K562 (cell line): ENCODE measurements at regions of chr1 and their contacts with region 1.

Region 1: DNA sequence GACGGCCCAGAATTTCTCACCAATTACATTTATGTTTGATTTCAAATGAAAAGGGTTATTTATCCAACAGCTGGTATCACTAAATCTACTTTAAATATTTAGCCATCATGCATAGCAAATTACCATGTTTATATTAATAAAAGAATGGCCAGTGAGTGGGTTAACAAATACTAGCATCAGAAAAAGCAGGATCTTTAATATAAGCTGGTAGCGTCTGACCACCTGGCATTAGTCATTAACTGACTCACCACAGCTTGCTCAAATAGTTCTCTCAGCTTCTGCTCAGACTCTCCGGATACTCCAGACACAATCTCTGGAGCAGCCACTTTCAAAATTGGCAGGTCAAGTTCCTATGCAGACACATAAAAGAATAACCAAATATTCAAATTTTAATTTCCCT is 29.7 kb downstream of the NVL start:
- DNase-seq: no peak
- ATAC-seq: no peak
- H3K4me3 ChIP-seq: no peak overlapping the region
- H3K27ac ChIP-seq: no peak overlapping the region
- H3K4me1 ChIP-seq: no peaks in the 10 kb centered on the region
- H3K27me3 ChIP-seq: no peaks in the 10 kb centered on the region
- CTCF ChIP-seq: no peak
- EP300 ChIP-seq: no peak
- POLR2A ChIP-seq: no peak
- RAD21 ChIP-seq: no peak

Region 2: GRCh38 chr1:224312025-224312424 is 11.7 kb after region 1 on chr1:
- CTCF ChIA-PET with region 1: no interaction called
- POLR2A ChIA-PET with region 1: interaction called, 17 read pairs
- in situ Hi-C with region 1: no loop called
- intact Hi-C with region 1: no loop called
- DNase-seq: no peak
- ATAC-seq: no peak
- H3K4me3 ChIP-seq: no peak overlapping the region
- H3K27ac ChIP-seq: no peak overlapping the region
- H3K4me1 ChIP-seq: no peaks in the 10 kb centered on the region
- H3K27me3 ChIP-seq: no peaks in the 10 kb centered on the region
- CTCF ChIP-seq: no peak
- EP300 ChIP-seq: no peak
- POLR2A ChIP-seq: no peak
- RAD21 ChIP-seq: no peak

Region 3: DNA sequence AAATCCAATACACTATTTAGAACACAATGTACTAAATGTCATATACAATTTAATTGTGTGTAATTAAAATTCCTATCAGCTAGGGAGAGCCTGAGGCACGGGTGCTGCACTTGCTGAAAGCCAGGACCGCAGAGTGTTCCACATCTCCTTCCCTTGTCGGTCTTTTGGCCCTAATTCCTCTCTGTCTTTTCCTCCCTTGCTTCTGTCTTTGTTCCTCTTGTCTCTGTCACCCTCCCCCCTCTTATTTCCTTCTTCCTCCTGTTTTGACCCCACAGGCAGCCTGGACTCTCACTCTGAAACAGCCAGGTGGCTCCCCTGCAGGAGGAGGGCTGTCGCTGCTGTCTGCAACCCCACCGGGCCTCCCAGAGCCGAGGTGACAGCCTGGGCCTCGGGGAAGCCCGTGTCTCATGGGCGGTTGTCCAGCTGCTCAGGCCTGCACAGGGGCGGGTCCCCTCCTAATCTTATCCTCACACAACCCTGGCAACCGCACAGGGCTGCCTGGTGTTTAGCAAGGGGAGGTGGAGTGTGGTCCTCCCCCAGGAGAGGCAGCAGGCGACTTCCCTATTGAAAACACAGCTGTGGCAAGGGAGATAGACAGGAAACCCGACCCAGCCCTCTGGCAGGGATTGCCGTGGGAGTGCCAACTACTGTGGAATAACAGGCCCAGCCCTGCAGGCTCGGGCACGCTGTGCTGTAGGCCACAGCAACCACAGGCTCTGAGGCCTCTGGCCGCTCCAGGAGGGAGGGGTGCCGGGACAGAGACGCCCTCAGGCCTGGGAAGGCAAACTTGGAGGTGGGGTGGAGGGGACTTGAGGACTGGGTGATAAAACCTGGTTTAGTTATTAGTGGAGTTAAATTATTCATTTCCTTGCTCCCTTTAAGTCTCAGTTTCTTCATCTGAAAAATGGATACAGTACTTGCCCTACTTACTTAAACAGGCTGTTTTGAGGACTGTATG is 203.1 kb after region 1 on chr1:
- CTCF ChIA-PET with region 1: no interaction called
- POLR2A ChIA-PET with region 1: no interaction called
- in situ Hi-C with region 1: no loop called
- intact Hi-C with region 1: no loop called
- DNase-seq: peak; percentile 99 to 100 (median 100)
- ATAC-seq: peak; percentile 97
- H3K4me3 ChIP-seq: peak overlapping the region; percentile 18; the same call in 1 of the 2 replicates
- H3K27ac ChIP-seq: peak overlapping the region; percentile 60
- H3K4me1 ChIP-seq: peaks cover 44 to 45% of the 10 kb centered on the region in 2 experiments
- H3K27me3 ChIP-seq: no peaks in the 10 kb centered on the region
- CTCF ChIP-seq: peak; percentile 66 to 73 (median 68)
- EP300 ChIP-seq: peak; percentile 96
- POLR2A ChIP-seq: 0 out of 2 replicates have a peak, but pooled peaks have one; percentile 35
- RAD21 ChIP-seq: peak; percentile 51 to 72

Region 4: DNA sequence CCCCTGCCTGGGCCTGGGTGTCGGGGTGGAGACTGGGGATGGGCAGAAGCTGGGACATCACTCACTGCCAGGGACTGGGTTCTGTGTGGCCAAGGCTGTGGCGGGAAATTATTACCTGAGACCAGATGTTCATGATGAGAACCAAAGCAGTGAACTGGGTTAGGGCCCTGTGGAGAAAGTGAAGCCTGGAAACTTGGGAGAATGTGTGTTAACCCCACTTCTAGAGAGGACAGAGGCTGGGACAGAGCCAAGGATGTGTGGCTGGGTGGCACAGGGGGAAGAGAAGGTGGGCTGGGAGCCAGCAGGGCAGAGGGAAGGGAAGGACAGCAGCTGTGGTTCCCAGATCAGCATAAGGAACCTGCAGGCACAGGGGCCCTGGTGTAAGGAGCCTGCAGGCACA is 347.1 kb after region 1 on chr1:
- CTCF ChIA-PET with region 1: no interaction called
- POLR2A ChIA-PET with region 1: no interaction called
- in situ Hi-C with region 1: no loop called
- intact Hi-C with region 1: no loop called
- DNase-seq: no peak
- ATAC-seq: no peak
- H3K4me3 ChIP-seq: no peak overlapping the region
- H3K27ac ChIP-seq: no peak overlapping the region
- H3K4me1 ChIP-seq: no peaks in the 10 kb centered on the region
- H3K27me3 ChIP-seq: peaks cover 19 to 69% of the 10 kb centered on the region in 2 experiments; a peak in 4 of 5 replicates
- CTCF ChIP-seq: no peak
- EP300 ChIP-seq: no peak
- POLR2A ChIP-seq: no peak
- RAD21 ChIP-seq: no peak